ENCODE measurements at regions of chr2 and their contacts with region 1.

Region 1: DNA sequence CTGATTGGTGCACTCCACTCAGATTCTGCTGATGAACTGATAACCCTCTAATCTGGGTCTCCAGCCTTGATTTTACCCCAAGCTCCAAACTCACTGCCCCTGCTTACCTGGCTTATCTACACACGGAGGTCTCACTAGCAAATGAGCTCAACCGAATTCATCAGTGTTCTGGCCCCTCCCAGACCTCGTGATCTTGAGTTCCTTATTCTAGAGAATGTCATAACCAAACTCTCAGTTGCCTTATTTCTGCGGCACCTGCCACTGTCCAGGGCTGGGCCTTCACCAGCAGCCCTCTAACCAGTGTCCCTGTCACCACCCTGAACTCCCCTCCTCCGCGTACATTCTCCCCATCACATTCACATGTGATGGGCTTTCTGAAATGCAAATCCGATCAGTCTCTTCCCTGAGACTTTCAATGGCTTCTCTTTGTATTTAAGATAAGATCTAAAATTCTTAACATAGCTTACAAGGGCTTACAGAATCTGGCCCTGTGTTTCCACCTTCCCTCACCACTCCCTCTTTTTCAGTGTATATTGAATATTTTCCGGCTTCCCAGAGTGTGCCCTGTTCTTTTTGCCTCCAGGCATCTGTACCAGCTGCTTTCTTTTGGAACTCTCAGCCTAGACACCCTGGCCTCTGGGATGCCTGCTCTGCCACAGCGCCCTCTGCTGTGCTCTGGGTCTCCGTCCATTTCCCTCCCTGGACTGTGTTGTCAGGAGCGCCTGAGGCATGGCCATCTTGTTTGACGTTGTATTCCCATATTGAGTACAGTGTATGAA is 31.1 kb downstream of the NAB1 start:
- DNase-seq: peak; percentile 38 to 69 (median 43)
- H3K4me3 ChIP-seq: no peak overlapping the region
- H3K4me3 Mint-ChIP-seq: peak overlapping the region in 5 of 7 donors; percentile 22 to 81 (median 43)
- H3K27ac ChIP-seq: no peak overlapping the region
- H3K27ac Mint-ChIP-seq: peak overlapping the region in 7 of 8 donors; percentile 15 to 92 (median 45)
- H3K4me1 ChIP-seq: peaks cover 12% of the 10 kb centered on the region
- H3K4me1 Mint-ChIP-seq: peaks cover 41 to 57% (median 51%) of the 10 kb centered on the region in 3 donors
- H3K27me3 ChIP-seq: no peaks in the 10 kb centered on the region
- H3K27me3 Mint-ChIP-seq: no peaks in the 10 kb centered on the region

Region 2: GRCh38 chr2:190382851-190383250 is 297.2 kb before region 1 on chr2:
- CTCF ChIA-PET with region 1: interaction called, 11 read pairs
- POLR2A ChIA-PET with region 1: no interaction called
- DNase-seq: peak in 4 of 5 donors; percentile 2 to 59 (median 56)
- H3K4me3 ChIP-seq: no peak overlapping the region
- H3K4me3 Mint-ChIP-seq: no peak overlapping the region
- H3K27ac ChIP-seq: no peak overlapping the region
- H3K27ac Mint-ChIP-seq: no peak overlapping the region
- H3K4me1 ChIP-seq: no peaks in the 10 kb centered on the region
- H3K4me1 Mint-ChIP-seq: peaks cover 0 to 5% (median 0%) of the 10 kb centered on the region in 3 donors
- H3K27me3 ChIP-seq: no peaks in the 10 kb centered on the region
- H3K27me3 Mint-ChIP-seq: peaks cover 0 to 3% of the 10 kb centered on the region in 2 donors

Region 3: DNA sequence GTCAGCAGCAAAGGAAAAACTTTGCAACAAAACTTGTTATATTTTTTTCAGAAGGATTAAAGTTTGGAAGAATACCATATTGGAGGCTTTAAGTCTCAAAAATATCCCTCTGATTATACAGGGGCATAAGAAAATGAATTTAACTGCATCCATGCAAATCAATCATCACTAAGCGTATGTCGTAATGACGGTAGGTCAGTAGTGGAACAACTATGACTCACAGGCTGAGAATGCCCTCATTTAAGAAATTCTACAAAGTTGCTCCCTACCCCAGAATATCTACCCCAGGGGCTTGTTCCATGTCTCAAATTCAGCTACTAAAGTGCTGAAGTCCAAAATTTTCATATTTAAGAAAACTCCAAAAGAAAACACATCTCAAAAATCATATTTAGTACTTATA is 43.6 kb before region 1 on chr2:
- CTCF ChIA-PET with region 1: interaction called, 21 read pairs
- POLR2A ChIA-PET with region 1: no interaction called
- DNase-seq: no peak
- H3K4me3 ChIP-seq: no peak overlapping the region
- H3K4me3 Mint-ChIP-seq: no peak overlapping the region
- H3K27ac ChIP-seq: no peak overlapping the region
- H3K27ac Mint-ChIP-seq: no peak overlapping the region
- H3K4me1 ChIP-seq: no peaks in the 10 kb centered on the region
- H3K4me1 Mint-ChIP-seq: no peaks in the 10 kb centered on the region
- H3K27me3 ChIP-seq: no peaks in the 10 kb centered on the region
- H3K27me3 Mint-ChIP-seq: no peaks in the 10 kb centered on the region

Region 4: DNA sequence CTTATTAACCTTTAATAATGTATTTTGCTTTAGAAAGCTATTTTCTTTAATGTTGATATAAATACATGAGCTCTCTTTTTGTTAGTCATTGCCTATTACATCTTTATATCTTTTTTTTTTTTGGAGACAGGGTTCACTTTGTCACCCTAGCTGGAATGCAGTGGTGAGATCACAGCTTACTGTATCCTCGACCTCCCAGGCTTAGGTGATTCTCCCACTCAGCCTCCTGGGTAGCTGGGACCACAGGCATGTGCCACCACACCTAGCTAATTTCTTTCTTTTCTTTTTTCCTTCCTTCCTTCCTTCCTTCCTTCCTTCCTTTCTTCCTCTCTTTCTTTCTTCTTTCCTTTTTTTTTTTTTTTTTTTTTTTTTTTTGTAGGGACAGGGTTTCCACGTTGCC is 15.8 kb before region 1 on chr2:
- CTCF ChIA-PET with region 1: interaction called, 23 read pairs
- POLR2A ChIA-PET with region 1: interaction called, 3 read pairs
- DNase-seq: no peak
- H3K4me3 ChIP-seq: no peak overlapping the region
- H3K4me3 Mint-ChIP-seq: no peak overlapping the region
- H3K27ac ChIP-seq: no peak overlapping the region
- H3K27ac Mint-ChIP-seq: peak overlapping the region in 1 of 8 donors; percentile 54
- H3K4me1 ChIP-seq: peaks cover 18% of the 10 kb centered on the region
- H3K4me1 Mint-ChIP-seq: peaks cover 34 to 68% (median 64%) of the 10 kb centered on the region in 3 donors
- H3K27me3 ChIP-seq: no peaks in the 10 kb centered on the region
- H3K27me3 Mint-ChIP-seq: peaks cover 0 to 2% of the 10 kb centered on the region in 2 donors

Region 5: DNA sequence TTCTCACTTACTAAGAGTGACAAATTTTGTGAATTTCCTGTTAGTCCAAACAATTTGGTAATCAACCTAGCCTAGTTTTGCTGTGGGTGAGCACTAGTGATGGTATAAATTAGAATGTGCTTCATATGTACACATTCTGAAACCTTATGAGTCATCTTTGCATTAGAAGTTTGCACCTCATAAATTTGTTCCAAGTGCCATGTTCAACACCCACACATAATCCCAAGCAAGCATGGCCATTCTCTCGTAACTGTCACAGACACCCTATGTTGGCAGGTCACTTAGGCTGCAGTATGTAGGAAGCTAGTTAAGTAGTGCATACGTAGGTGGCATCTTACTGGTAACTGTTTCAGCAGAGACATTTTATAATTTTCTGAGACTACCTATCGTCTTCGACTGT is 15.7 kb after region 1 on chr2:
- CTCF ChIA-PET with region 1: interaction called, 20 read pairs
- POLR2A ChIA-PET with region 1: no interaction called
- DNase-seq: no peak
- H3K4me3 ChIP-seq: no peak overlapping the region
- H3K4me3 Mint-ChIP-seq: peak overlapping the region in 2 of 7 donors; percentile 2 to 16
- H3K27ac ChIP-seq: no peak overlapping the region
- H3K27ac Mint-ChIP-seq: peak overlapping the region in 6 of 8 donors; percentile 0 to 42 (median 18)
- H3K4me1 ChIP-seq: no peaks in the 10 kb centered on the region
- H3K4me1 Mint-ChIP-seq: peaks cover 11 to 39% (median 30%) of the 10 kb centered on the region in 3 donors
- H3K27me3 ChIP-seq: no peaks in the 10 kb centered on the region
- H3K27me3 Mint-ChIP-seq: no peaks in the 10 kb centered on the region

Region 6: GRCh38 chr2:190835303-190835930 is 155.4 kb after region 1 on chr2:
- CTCF ChIA-PET with region 1: no interaction called
- POLR2A ChIA-PET with region 1: no interaction called
- DNase-seq: no peak
- H3K4me3 ChIP-seq: no peak overlapping the region
- H3K4me3 Mint-ChIP-seq: no peak overlapping the region
- H3K27ac ChIP-seq: no peak overlapping the region
- H3K27ac Mint-ChIP-seq: peak overlapping the region in 1 of 8 donors; percentile 26
- H3K4me1 ChIP-seq: no peaks in the 10 kb centered on the region
- H3K4me1 Mint-ChIP-seq: no peaks in the 10 kb centered on the region
- H3K27me3 ChIP-seq: no peaks in the 10 kb centered on the region
- H3K27me3 Mint-ChIP-seq: peaks cover 2 to 3% of the 10 kb centered on the region in 2 donors

Measured in CD8-positive, alpha-beta memory T cell (primary cell).